ENCODE measurements at regions of chr5 and their contacts with region 1.

Region 1: DNA sequence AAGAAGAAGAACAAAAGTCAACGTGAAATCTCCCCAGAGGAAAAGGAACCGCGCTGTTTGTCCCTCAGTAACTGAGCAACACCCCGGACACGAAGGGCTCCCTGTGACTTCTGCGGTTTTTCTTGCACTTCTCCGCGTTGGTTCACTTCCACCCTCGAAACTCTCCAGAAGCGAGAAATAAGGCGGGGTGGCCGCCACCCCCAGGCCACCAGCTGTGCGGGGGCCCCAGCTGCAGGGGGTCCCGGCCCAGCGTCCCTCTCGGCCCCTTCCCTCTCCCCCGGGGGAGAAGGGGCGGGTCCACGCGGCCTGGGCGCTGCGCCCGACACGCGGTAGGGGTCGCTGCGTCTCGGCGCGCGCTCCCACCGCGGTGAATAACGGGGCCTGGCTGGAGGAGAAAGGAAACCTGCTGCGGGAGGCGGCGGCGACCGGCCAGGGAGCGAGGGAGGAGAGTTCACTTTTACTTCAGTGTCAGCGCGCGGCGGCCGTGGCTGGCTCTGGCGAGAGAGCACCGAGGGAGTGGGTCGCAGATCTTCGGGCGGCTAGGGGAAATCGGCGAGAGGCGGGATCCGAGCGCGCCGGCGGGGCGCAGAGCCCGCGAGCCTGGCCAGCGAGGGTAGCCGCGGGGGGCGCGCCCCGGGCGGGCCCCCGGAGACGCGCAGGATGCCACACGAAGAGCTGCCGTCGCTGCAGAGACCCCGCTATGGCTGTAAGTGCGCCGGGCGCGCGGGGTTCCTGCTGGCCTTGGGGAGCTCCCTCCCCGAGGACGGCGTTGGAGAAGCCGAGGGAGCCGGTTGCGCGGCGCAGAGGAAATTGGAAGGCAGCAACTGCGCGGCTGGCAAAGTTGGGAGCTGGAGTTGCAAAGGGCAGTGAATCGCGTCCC is at the start of gene IQGAP2:
- DNase-seq: peak; percentile 87
- H3K4me3 Mint-ChIP-seq: peak within 1 kb of the TSS; percentile 98
- H3K27ac Mint-ChIP-seq: peak within 1 kb of the TSS; percentile 98
- H3K4me1 Mint-ChIP-seq: peaks cover 47% of the 10 kb centered on the region
- H3K27me3 Mint-ChIP-seq: no peaks in the 10 kb centered on the region
- total RNA-seq, gene IQGAP2: 92.7 to 93.0 TPM

Region 2: DNA sequence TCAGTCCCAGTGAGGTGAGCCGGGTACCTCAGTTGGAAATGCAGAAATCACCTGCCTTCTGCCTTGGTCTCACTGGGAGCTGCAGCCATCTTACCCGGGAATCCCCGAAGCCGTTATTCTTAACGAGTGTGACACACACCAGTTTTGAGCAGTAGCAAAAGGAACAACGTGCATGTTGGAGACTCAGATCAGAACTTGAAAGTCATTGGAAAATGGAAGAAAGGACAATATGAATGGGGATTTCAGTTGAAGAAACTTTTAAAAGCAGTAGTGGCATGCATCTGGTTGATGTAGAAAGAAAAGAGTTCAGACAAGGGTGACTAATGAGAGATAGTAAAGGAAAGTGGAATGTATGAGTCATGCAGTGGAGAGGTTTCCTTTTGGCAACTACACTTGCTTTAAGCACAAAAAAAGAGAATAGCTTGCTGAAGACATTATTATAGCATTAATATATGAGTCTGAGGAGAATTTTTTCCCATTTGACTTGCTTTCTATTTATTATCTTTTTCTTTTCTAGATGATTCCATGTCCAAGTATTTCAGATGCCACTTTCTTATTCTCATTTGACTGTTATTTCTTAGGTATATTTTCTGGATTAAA is 836.3 kb before region 1 on chr5:
- CTCF ChIA-PET with region 1: no interaction called
- POLR2A ChIA-PET with region 1: no interaction called
- intact Hi-C with region 1: loop called (anchors 5 kb)
- DNase-seq: peak; percentile 78
- H3K4me3 Mint-ChIP-seq: peak overlapping the region; percentile 57
- H3K27ac Mint-ChIP-seq: peak overlapping the region; percentile 96
- H3K4me1 Mint-ChIP-seq: peaks cover 69% of the 10 kb centered on the region
- H3K27me3 Mint-ChIP-seq: no peaks in the 10 kb centered on the region

Region 3: DNA sequence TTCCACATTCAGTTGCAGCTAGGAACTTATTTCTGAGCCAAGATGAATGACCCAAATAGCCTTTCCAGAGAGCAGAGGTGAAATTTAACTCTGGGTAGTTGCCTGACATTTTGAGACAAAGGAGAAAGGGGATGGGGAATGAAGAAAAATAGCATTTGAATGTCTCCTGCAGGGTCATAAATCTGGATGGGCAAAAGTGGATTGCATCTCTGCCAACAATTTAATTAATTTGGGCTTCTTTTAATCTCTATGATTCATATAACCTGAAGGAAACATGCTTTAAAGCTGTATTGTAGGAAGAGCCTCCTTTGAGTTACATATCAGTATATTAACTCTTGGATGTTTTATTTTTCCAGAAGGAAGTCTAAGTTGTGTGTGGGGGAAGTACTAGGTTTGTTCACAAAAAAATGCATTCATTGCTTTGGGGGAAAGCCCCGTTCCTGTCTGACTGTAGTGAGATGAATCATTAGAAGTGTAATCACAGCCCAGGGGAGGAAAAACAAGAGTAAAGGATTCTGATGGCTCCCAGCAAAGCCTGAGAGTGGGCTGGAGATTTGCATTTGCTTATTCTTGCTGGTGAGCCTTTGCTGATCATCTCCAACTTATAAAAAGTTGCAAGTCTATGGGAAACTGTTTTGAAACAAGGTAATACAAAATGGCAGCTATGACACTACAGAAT is 133.1 kb before region 1 on chr5:
- CTCF ChIA-PET with region 1: no interaction called
- POLR2A ChIA-PET with region 1: interaction called, 10 read pairs
- intact Hi-C with region 1: loop called (anchors 1 kb)
- DNase-seq: peak; percentile 67
- H3K4me3 Mint-ChIP-seq: peak overlapping the region; percentile 50
- H3K27ac Mint-ChIP-seq: peak overlapping the region; percentile 95
- H3K4me1 Mint-ChIP-seq: peaks cover 41% of the 10 kb centered on the region
- H3K27me3 Mint-ChIP-seq: peaks cover 5% of the 10 kb centered on the region

Region 4: GRCh38 chr5:76473661-76474060 is 70.5 kb after region 1 on chr5:
- CTCF ChIA-PET with region 1: interaction called, 14 read pairs
- POLR2A ChIA-PET with region 1: interaction called, 14 read pairs
- intact Hi-C with region 1: loop called (anchors 1 kb)
- DNase-seq: peak; percentile 87
- H3K4me3 Mint-ChIP-seq: peak overlapping the region; percentile 22
- H3K27ac Mint-ChIP-seq: peak overlapping the region; percentile 82
- H3K4me1 Mint-ChIP-seq: peaks cover 85% of the 10 kb centered on the region
- H3K27me3 Mint-ChIP-seq: no peaks in the 10 kb centered on the region

Region 5: DNA sequence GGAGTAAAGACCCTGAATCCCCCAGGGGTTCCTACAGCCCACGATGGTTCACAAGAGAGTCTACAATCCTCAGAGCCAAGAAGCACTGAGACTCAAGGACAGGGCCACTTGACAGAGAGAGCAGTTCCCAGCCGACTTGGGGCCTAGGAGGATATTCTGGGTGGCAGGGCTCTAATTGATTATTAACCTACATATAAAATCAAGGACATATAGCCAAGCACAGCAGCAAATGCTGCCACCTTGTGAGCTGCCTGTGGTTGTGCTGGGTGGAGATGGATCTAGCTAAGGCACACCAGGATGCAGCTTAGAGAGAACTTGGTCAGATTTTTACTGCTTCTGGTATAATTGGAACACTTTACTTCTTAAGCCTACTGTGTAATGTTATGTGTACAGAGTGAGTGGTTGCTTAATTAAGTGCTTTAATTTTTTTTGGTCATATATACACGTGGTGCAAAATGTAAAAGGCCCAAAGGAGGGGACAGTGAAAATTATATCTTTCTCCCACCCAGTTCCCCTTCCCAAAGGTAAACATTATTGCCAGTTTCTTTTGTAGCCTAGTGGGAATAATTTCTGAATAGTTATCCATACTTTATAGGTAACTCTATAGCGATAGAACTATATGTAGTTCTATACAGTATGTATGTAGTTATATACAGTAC is 141.3 kb after region 1 on chr5:
- CTCF ChIA-PET with region 1: interaction called, 164 read pairs
- POLR2A ChIA-PET with region 1: interaction called, 68 read pairs
- intact Hi-C with region 1: loop called (anchors 1 kb)
- DNase-seq: peak; percentile 79
- H3K4me3 Mint-ChIP-seq: peak overlapping the region; percentile 74
- H3K27ac Mint-ChIP-seq: peak overlapping the region; percentile 99
- H3K4me1 Mint-ChIP-seq: peaks cover 92% of the 10 kb centered on the region
- H3K27me3 Mint-ChIP-seq: no peaks in the 10 kb centered on the region

Region 6: DNA sequence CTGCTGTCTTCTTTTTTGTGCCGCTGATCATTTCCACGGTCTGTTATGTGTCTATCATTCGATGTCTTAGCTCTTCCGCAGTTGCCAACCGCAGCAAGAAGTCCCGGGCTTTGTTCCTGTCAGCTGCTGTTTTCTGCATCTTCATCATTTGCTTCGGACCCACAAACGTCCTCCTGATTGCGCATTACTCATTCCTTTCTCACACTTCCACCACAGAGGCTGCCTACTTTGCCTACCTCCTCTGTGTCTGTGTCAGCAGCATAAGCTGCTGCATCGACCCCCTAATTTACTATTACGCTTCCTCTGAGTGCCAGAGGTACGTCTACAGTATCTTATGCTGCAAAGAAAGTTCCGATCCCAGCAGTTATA is 329.9 kb after region 1 on chr5:
- CTCF ChIA-PET with region 1: no interaction called
- POLR2A ChIA-PET with region 1: no interaction called
- intact Hi-C with region 1: loop called (anchors 2 kb)
- DNase-seq: peak; percentile 77
- H3K4me3 Mint-ChIP-seq: peak overlapping the region; percentile 46
- H3K27ac Mint-ChIP-seq: peak overlapping the region; percentile 86
- H3K4me1 Mint-ChIP-seq: peaks cover 29% of the 10 kb centered on the region
- H3K27me3 Mint-ChIP-seq: peaks cover 3% of the 10 kb centered on the region